OCI-LY7 (cell line): ENCODE measurements at regions of chr6 and their contacts with region 1.

Region 1: GRCh38 chr6:11692448-11693376 is 85.9 kb downstream of the ADTRP start:
- DNase-seq: no peak
- H3K4me3 ChIP-seq: no peak overlapping the region
- H3K27ac ChIP-seq: no peak overlapping the region
- H3K4me1 ChIP-seq: no peaks in the 10 kb centered on the region
- CTCF ChIP-seq: no peak

Region 2: DNA sequence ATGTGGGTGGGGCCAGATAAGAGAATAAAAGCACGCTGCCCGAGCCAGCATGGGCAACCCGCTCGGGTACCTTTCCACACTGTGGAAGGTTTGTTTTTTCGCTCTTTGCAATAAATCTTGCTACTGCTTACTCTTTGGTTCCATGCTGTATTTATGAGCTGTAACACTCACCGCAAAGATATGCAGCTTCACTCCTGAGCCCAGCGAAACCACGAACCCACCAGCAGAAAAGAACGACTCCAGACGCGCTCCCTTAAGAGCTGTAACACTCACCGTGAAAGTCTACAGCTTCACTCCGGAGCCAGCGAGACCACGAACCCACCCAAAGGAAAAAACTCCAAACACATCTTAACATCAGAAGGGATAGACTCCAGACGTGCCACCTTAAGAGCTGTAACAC is 1354.6 kb before region 1 on chr6:
- CTCF ChIA-PET with region 1: interaction called, 12 read pairs
- POLR2A ChIA-PET with region 1: no interaction called
- intact Hi-C with region 1: no loop called
- DNase-seq: no peak
- H3K4me3 ChIP-seq: no peak overlapping the region
- H3K27ac ChIP-seq: no peak overlapping the region
- H3K4me1 ChIP-seq: no peaks in the 10 kb centered on the region
- CTCF ChIP-seq: no peak

Region 3: DNA sequence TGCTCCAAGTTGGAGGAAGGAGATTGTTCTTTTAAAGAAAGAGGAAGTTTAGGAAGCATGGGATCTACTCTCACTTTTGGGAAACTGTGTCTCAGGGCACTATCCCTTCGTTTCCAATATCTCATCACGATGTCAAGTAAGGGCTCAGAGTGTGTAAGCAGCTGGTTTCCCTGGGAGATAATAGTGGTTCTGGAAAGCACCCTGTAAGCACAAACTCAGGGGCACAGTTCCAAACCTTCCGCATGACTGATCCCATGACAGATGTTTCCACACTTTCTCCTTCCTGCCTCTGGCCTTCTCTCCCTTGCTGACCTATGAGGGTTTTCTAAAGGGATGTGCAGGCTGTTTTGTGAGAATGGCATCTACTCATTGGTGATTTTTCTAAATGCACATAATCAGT is 52.0 kb after region 1 on chr6:
- CTCF ChIA-PET with region 1: no interaction called
- POLR2A ChIA-PET with region 1: no interaction called
- intact Hi-C with region 1: no loop called
- DNase-seq: no peak
- H3K4me3 ChIP-seq: no peak overlapping the region
- H3K27ac ChIP-seq: no peak overlapping the region
- H3K4me1 ChIP-seq: no peaks in the 10 kb centered on the region
- CTCF ChIP-seq: no peak

Region 4: GRCh38 chr6:12621754-12622153 is 929.0 kb after region 1 on chr6:
- CTCF ChIA-PET with region 1: no interaction called
- POLR2A ChIA-PET with region 1: no interaction called
- intact Hi-C with region 1: no loop called
- DNase-seq: no peak
- H3K4me3 ChIP-seq: no peak overlapping the region
- H3K27ac ChIP-seq: no peak overlapping the region
- H3K4me1 ChIP-seq: no peaks in the 10 kb centered on the region
- CTCF ChIP-seq: no peak